ENCODE measurements at regions of chr10 and their contacts with region 1.

Region 1: DNA sequence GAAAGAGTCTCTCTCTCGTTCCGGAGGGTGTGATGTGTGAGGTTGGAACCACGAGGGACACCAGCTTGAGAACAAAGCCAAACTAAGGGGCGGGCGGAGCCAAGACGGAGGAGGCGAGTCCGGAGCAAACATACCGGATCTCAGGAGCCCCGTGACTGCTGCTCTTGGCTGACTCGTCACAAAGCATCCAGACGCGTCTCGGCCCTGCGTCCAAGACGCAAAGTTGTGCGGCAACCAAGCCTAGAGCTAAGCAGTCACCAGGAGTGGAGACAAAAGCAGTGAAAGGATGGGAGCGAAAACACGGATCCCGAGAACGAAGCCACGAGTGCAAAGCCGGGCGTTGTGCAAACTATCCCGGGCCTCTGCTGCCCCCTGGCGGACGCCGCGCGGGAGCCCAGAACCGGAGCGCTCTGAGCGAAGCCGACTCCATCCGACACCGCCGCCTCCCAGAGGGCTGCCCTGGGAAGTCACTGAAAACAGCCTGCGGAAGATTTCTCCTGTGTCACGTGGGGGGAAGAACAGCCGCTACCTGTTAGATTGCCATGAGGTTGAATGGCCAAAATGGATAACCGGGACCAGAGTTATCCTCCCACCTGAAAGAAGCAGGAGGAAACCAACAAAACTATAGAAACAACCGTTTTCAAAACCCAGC is 46.4 kb upstream of the TMEM72 start:
- ATAC-seq: peak; percentile 82 to 99 (median 98)
- H3K4me3 ChIP-seq: peak overlapping the region; percentile 12 to 30 (median 27)
- H3K27ac ChIP-seq: no peak overlapping the region
- H3K4me1 ChIP-seq: peaks cover 2 to 15% of the 10 kb centered on the region in 2 donors

Region 2: GRCh38 chr10:43671656-43672531 is 1192.9 kb before region 1 on chr10:
- in situ Hi-C with region 1: loop called (anchors 10 to 25 kb)
- ATAC-seq: peak; percentile 64 to 90 (median 83)
- H3K4me3 ChIP-seq: no peak overlapping the region
- H3K27ac ChIP-seq: no peak overlapping the region
- H3K4me1 ChIP-seq: peaks cover 0 to 9% of the 10 kb centered on the region in 2 donors

Region 3: DNA sequence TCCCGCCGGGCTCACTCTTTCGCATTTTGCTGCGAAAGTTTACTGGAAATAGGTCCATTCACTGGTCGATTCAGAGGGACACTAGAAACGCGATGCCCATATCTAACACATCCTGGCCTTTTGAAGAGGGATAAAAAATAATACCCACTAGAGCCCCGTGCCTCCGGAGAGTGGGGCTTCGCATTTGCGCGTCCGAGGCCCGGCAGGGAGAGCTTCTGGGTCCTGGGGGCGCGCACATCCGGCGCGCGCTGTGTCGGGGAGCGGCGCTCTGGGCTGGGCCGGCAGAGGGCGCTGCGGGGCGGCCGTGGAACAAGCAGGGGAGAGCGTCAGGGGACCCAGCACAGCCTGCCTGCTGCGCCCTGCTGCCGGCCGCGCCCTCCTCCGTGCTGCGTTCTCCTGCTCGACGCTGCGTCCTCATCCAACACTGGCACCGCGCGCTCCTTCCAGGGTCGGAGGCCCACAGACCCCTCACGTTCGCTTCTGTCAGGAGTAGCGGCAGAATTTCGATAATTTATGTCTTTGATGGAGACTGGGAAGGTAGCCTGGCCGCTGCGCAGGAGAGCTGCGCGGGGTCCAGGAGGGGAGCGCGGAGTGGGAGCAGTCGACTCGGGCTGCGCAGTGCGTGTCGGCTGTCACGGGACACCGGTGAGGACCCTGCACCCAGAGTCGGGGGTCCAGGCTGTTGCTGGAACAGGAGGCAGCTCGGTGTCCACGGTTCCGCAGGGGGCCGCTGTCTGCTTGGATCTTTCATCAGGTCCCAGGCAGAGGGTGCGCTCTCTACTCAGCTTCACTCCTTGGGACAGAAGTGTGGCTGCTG is 1174.6 kb before region 1 on chr10:
- in situ Hi-C with region 1: loop called in 3 of 9 experiments (anchors 25 kb)
- ATAC-seq: peak; percentile 94 to 100 (median 96)
- H3K4me3 ChIP-seq: peak overlapping the region; percentile 37 to 55 (median 41)
- H3K27ac ChIP-seq: peak overlapping the region; percentile 68 to 69
- H3K4me1 ChIP-seq: peaks cover 0 to 6% of the 10 kb centered on the region in 2 donors

Region 4: DNA sequence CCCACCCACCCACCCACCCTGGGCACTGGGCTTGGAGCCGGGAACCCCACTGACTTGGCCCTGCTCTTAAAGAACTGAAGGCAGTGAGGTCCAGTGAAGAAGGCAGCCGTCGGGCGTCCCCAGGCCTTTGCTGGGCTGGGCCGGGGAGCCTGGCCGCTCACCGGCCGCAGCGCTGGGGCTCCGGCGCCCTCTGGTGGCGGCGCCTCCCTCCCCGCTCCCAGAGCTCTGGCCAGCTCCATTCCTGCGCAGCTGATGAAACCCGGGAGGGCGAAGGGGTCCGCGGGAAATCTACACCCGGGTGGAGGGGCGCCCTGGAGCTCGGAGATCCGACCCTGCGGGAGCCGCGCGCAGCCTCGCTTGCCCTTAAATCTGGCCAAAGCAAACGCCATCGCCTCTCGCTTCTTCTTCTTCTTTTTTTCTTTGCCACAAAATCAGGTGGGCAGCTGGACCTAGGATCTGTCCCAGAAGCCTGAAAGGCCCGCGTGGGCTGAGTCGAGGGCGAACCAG is 478.2 kb before region 1 on chr10:
- in situ Hi-C with region 1: loop called in 4 of 9 experiments (anchors 10 to 25 kb)
- ATAC-seq: peak; percentile 65 to 94 (median 80)
- H3K4me3 ChIP-seq: peak overlapping the region in 2 of 5 donors; percentile 6 to 7
- H3K27ac ChIP-seq: no peak overlapping the region
- H3K4me1 ChIP-seq: peaks cover 20 to 21% of the 10 kb centered on the region in 2 donors